ENCODE measurements at regions of chr12 and their contacts with region 1.

Region 1: GRCh38 chr12:22100958-22101748 is 55.1 kb downstream of the CMAS start:
- DNase-seq: peak; percentile 36
- H3K4me3 ChIP-seq: no peak overlapping the region
- H3K27ac ChIP-seq: no peak overlapping the region
- H3K4me1 ChIP-seq: no peaks in the 10 kb centered on the region
- H3K27me3 ChIP-seq: no peaks in the 10 kb centered on the region
- CTCF ChIP-seq: peak; percentile 52

Region 2: DNA sequence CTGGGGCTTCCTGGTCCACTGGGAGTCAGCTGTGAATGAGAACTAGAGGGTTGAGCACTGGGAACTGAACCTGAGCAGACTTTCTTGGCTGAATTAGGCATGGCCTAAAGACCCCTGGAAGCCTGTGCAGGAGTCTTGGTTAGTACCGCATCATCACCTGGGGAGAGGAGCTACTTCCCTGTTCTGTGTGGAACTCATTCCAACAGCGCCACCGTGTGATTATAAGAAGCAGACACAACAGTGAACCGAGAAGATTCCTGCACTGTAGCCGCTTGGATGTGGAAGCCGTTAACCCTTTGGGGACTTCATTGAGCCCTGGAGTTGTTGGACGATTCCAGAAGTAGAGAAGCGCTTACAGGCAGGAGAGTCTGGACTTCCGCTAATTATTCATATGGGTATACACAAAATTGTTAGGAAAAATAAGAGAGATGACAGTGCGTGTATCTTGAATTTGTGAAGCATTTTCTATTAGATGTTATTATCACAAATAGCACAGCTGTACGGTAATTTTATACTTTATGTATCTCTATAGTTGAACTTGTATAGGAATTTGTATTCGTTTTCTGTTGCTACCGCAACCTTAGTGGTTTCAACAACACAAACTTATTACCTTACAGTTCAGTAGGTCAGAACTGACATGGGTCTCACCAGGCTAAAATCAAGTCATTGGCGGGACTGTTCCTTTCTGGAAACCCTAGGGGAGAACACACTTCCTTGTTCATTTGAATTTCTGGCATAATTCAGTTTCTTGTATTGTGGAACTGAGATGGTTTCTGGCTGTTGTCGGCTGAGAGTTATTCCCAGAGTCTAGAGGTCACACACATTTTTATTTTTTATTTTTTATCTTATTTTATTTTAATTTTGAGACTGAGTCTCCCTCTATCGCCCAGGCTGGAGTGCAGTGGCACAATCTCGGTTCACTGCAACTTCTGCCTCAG is 342.5 kb after region 1 on chr12:
- CTCF ChIA-PET with region 1: interaction called, 3 read pairs
- POLR2A ChIA-PET with region 1: no interaction called
- intact Hi-C with region 1: loop called (anchors 5 kb)
- DNase-seq: peak; percentile 86
- H3K4me3 ChIP-seq: no peak overlapping the region
- H3K27ac ChIP-seq: no peak overlapping the region
- H3K4me1 ChIP-seq: no peaks in the 10 kb centered on the region
- H3K27me3 ChIP-seq: no peaks in the 10 kb centered on the region
- CTCF ChIP-seq: peak; percentile 83

Region 3: GRCh38 chr12:22459838-22460490 is 358.8 kb after region 1 on chr12:
- CTCF ChIA-PET with region 1: no interaction called
- POLR2A ChIA-PET with region 1: no interaction called
- intact Hi-C with region 1: loop called (anchors 5 kb)
- DNase-seq: peak; percentile 74
- H3K4me3 ChIP-seq: no peak overlapping the region
- H3K27ac ChIP-seq: no peak overlapping the region
- H3K4me1 ChIP-seq: peaks cover 8% of the 10 kb centered on the region
- H3K27me3 ChIP-seq: no peaks in the 10 kb centered on the region
- CTCF ChIP-seq: peak; percentile 73

Measured in A673 (cell line).